Psoas muscle (tissue), 8 donors: ENCODE measurements at regions of chr16 and their contacts with region 1.

Region 1: DNA sequence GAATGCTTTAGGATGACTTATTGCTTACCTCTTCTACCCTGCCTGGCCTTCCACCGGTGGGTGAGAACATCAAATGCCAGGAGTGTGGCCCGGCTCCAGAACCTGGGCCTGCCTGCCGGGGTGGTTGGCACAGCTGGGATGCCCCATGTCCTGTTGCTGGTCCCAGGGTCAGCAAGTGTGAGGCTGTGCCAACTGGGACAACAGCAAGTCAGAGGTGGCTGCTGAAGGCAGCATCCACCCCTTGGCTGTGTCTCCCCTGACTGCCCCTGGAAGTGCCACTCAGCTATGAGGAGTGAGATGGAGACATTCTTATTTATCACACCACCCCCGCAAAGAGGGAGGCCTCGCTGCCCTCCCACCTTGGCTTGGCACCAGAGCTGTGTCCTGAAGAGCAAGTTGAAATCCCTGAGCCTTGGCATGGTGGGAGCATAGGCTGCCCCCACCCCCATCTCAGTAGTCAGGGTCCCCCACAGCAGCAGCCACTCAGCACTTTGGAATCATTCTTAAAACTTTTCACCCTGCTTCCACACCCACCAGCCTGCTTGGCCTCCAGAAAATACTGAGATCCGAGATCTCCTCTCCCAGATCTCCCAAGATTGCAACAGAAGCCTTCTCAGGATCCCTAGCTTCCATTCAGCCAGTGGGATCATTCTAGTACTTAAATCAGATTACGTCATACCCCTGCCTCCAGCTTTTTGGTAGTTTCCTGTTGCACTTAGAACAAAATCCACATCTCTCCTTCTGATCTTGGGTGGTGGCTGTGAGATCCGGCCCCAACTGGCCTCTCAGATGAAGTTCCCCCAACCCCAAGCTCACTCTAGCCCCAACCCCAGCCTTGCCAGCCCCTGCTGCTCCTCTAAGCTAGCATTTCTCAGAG is 127.5 kb downstream of the SOCS1 start:
- DNase-seq: no peak
- ATAC-seq: peak in 2 of 4 donors; percentile 38 to 54
- H3K4me3 ChIP-seq: no peak overlapping the region
- H3K27ac ChIP-seq: no peak overlapping the region
- H3K4me1 ChIP-seq: peaks cover 26% of the 10 kb centered on the region
- H3K27me3 ChIP-seq: no peaks in the 10 kb centered on the region
- CTCF ChIP-seq: no peak

Region 2: DNA sequence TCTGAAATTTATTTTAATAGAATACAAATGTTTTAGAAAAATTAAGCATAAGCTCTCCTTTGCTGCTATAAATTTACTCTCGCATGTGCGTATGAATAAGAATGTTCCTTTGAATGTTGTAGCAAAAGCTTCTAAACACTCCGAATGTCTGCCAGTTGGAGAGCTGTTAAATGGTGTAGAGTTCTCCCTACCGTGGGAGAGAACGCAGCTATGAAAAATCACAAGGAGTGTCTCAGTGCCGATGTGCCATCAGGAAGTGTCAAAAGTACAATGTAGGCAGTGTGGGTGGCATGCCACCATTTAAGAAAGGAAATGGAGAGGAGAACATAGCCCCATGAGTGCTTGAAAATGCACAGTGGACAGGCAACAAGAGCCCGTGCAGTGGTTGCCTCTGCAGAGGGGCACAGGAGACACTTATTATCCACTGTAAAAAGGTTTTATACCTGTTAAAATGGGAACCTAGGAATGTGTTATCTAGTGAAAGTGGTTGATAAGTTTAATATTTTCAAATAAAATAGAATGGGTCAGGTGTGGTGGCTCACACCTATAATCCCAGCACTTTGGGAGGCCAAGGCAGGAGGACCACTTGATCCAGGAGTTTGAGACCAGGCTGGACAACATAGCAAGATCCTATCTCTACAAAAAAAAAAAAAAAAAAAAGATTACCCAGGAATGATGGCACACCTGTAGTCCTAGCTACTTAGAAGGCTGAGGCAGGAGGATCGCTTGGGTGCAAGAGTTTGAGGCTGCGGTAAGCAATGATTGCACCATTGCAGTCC is 16.5 kb before region 1 on chr16:
- intact Hi-C with region 1: loop called in 1 of 2 experiments (anchors 2 kb)
- DNase-seq: no peak
- ATAC-seq: no peak
- H3K4me3 ChIP-seq: no peak overlapping the region
- H3K27ac ChIP-seq: no peak overlapping the region
- H3K4me1 ChIP-seq: no peaks in the 10 kb centered on the region
- H3K27me3 ChIP-seq: no peaks in the 10 kb centered on the region
- CTCF ChIP-seq: no peak